A549 (cell line): ENCODE measurements at regions of chr22 and their contacts with region 1.

Region 1: GRCh38 chr22:42437488-42438292 is 5.5 kb upstream of the NFAM1 start:
- DNase-seq: peak; percentile 54 to 58
- ATAC-seq: peak; percentile 81 to 93
- H3K4me3 ChIP-seq: peak overlapping the region; percentile 50
- H3K27ac ChIP-seq: peak overlapping the region; percentile 71 to 72; a peak in 5 of 6 replicates
- H3K4me1 ChIP-seq: peaks cover 3% of the 10 kb centered on the region; the same call in 1 of the 3 replicates
- CTCF ChIP-seq: peak; percentile 82
- EP300 ChIP-seq: no peak
- POLR2A ChIP-seq: no peak
- RAD21 ChIP-seq: peak; percentile 93 to 94

Region 2: DNA sequence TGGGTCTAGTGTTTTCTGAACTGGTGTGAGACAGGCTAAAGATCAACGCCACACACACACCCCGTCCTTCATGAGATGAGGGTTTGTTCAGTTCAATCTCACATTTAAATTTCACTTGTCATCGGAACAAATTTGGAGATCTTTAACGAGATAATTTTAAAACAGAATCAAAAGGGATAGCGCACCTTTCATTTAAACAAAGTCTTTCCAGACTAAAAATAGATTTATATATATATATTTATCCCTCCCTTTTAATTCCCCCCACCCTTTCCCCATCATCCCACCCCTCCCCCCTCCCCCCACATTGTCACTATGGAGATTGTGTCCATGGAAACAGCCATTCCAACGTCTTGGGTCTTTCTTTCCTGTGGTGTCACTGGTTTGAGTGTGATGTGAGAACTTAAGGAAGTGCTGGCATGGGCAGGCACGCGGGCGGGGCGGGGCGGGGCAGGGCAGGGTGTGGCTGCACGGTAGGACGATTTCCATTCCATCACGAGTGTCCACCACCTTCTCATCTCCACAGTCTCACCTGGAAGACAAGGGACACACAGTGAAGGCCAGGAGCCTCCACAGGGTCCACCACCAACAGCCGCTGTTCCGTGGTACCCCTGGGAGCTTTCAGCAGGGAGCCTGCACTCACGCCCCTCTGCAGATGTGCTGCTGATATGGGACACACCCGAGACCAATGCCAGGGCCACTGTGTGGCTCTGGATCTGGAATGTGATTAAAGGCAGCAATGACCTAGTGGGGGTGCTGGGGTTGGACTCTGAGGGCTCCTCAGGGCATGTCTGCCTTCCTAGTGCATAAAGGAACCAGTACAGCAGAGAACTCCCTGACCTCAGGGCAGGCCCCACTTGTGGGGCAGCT is 276.6 kb before region 1 on chr22:
- CTCF ChIA-PET with region 1: interaction called, 10 read pairs
- POLR2A ChIA-PET with region 1: no interaction called
- DNase-seq: peak; percentile 28 to 81
- ATAC-seq: peak; percentile 49 to 68; a peak in 3 of 6 replicates
- H3K4me3 ChIP-seq: no peak overlapping the region
- H3K27ac ChIP-seq: peak overlapping the region; percentile 38 to 50; a peak in 3 of 6 replicates
- H3K4me1 ChIP-seq: peaks cover 13% of the 10 kb centered on the region
- CTCF ChIP-seq: no peak
- EP300 ChIP-seq: no peak
- POLR2A ChIP-seq: no peak
- RAD21 ChIP-seq: no peak

Region 3: GRCh38 chr22:42169055-42169469 is 268.6 kb before region 1 on chr22:
- CTCF ChIA-PET with region 1: interaction called, 65 read pairs
- POLR2A ChIA-PET with region 1: no interaction called
- DNase-seq: peak; percentile 71 to 78
- ATAC-seq: peak; percentile 84 to 95
- H3K4me3 ChIP-seq: no peak overlapping the region
- H3K27ac ChIP-seq: no peak overlapping the region
- H3K4me1 ChIP-seq: peaks cover 22% of the 10 kb centered on the region
- CTCF ChIP-seq: peak; percentile 93
- EP300 ChIP-seq: no peak
- POLR2A ChIP-seq: no peak
- RAD21 ChIP-seq: peak; percentile 92 to 93

Region 4: GRCh38 chr22:42320443-42321416 is 117.0 kb before region 1 on chr22:
- CTCF ChIA-PET with region 1: no interaction called
- POLR2A ChIA-PET with region 1: no interaction called
- DNase-seq: no peak
- ATAC-seq: no peak
- H3K4me3 ChIP-seq: no peak overlapping the region
- H3K27ac ChIP-seq: no peak overlapping the region
- H3K4me1 ChIP-seq: peaks cover 30% of the 10 kb centered on the region
- CTCF ChIP-seq: no peak
- EP300 ChIP-seq: no peak
- POLR2A ChIP-seq: no peak
- RAD21 ChIP-seq: no peak

Region 5: DNA sequence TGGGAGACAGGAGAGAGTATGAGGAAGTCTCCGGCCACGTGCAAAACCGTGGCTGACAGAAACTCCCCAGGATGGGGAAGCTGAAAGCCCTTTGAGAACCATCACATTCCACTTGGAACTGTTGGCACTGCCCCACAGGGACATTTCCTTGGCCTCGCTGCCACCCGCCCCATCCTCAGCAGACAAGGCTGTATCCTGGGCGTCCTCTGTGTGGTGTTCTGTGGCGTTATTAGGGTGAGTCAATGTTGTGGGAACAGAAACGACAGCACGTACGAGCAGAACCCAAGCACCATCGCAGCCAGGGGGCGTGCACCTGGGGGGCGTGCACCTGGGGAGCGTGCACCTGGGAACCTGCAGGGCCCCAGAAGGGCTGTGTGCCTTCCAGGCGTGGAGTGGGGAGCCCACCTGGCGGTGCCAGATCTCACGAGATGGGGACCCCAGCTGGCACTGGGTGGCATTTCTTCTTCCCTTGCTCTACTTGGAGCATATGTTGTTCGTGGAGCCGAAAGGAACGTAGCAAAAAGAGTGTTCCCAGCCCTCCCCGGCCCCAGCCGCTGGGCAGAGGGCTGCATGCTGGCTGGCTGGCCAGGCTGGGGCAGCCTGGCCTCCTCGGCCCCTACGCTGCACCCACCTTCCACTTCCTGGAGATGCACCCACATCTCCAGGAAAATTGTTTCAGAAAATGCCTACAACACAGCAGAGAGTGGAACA is 40.9 kb before region 1 on chr22:
- CTCF ChIA-PET with region 1: no interaction called
- POLR2A ChIA-PET with region 1: no interaction called
- DNase-seq: no peak
- ATAC-seq: 0 out of 6 replicates have a peak, but pooled peaks of 1 of the 2 experiments have one; percentile 49
- H3K4me3 ChIP-seq: no peak overlapping the region
- H3K27ac ChIP-seq: no peak overlapping the region
- H3K4me1 ChIP-seq: no peaks in the 10 kb centered on the region
- CTCF ChIP-seq: no peak
- EP300 ChIP-seq: no peak
- POLR2A ChIP-seq: no peak
- RAD21 ChIP-seq: no peak

Region 6: GRCh38 chr22:42452456-42452855 is 14.8 kb after region 1 on chr22:
- CTCF ChIA-PET with region 1: no interaction called
- POLR2A ChIA-PET with region 1: no interaction called
- DNase-seq: no peak
- ATAC-seq: 0 out of 6 replicates have a peak, but pooled peaks of 1 of the 2 experiments have one; percentile 24
- H3K4me3 ChIP-seq: no peak overlapping the region
- H3K27ac ChIP-seq: no peak overlapping the region
- H3K4me1 ChIP-seq: no peaks in the 10 kb centered on the region
- CTCF ChIP-seq: no peak
- EP300 ChIP-seq: no peak
- POLR2A ChIP-seq: no peak
- RAD21 ChIP-seq: no peak

Region 7: GRCh38 chr22:42680648-42681047 is 243.0 kb after region 1 on chr22:
- CTCF ChIA-PET with region 1: no interaction called
- POLR2A ChIA-PET with region 1: no interaction called
- DNase-seq: peak; percentile 64 to 65
- ATAC-seq: peak; percentile 77 to 81
- H3K4me3 ChIP-seq: no peak overlapping the region
- H3K27ac ChIP-seq: peak overlapping the region; percentile 36 to 77; a peak in 5 of 6 replicates
- H3K4me1 ChIP-seq: peaks cover 13% of the 10 kb centered on the region
- CTCF ChIP-seq: no peak
- EP300 ChIP-seq: no peak
- POLR2A ChIP-seq: no peak
- RAD21 ChIP-seq: no peak